ENCODE measurements at regions of chr1 and their contacts with region 1.

Region 1: GRCh38 chr1:156383023-156383422 is 14.0 kb downstream of the RHBG start:
- DNase-seq: peak in 5 of 6 donors; percentile 41 to 76 (median 60)
- ATAC-seq: peak; percentile 85 to 94 (median 92)
- H3K4me3 ChIP-seq: no peak overlapping the region
- H3K27ac ChIP-seq: no peak overlapping the region
- H3K4me1 ChIP-seq: no peaks in the 10 kb centered on the region
- H3K27me3 ChIP-seq: no peaks in the 10 kb centered on the region
- CTCF ChIP-seq: peak; percentile 59 to 78 (median 66)

Region 2: DNA sequence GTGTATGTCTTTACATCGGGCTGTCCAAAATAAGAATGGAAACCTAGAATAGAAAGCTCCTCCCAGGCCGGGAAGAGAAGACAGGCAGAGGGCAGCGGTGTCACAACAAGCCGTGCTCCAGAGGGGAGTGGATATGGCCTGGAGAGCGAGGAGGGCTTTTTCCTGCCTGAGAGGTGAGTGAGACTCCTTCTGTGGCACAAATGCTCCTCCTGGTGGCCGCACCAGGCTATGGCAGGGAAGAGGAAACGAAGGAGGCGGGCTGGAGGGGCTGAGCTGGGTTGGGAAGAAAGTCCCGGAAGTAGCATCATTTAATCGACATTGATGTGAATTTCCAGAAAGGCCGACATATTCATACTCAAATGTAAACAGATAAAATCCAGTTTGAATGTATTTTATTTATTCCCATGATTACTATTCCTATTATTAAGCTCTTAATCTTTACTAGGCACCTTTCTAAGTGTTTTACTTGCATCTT is 62.8 kb after region 1 on chr1:
- intact Hi-C with region 1: loop called (anchors 2 to 10 kb)
- DNase-seq: peak; percentile 73 to 92 (median 86)
- ATAC-seq: peak; percentile 94 to 100 (median 99)
- H3K4me3 ChIP-seq: no peak overlapping the region
- H3K27ac ChIP-seq: no peak overlapping the region
- H3K4me1 ChIP-seq: no peaks in the 10 kb centered on the region
- H3K27me3 ChIP-seq: peaks cover 0 to 22% (median 0%) of the 10 kb centered on the region in 4 donors
- CTCF ChIP-seq: peak; percentile 86 to 96 (median 91)

Region 3: GRCh38 chr1:156625436-156626078 is 242.5 kb after region 1 on chr1:
- intact Hi-C with region 1: loop called in 1 of 3 experiments (anchors 5 kb)
- DNase-seq: peak in 5 of 6 donors; percentile 21 to 88 (median 70)
- ATAC-seq: peak in 3 of 4 donors; percentile 73 to 78 (median 74)
- H3K4me3 ChIP-seq: peak overlapping the region in 1 of 4 donors; percentile 45
- H3K27ac ChIP-seq: no peak overlapping the region
- H3K4me1 ChIP-seq: peaks cover 4 to 14% (median 5%) of the 10 kb centered on the region in 3 donors
- H3K27me3 ChIP-seq: peaks cover 0 to 32% (median 6%) of the 10 kb centered on the region in 4 donors
- CTCF ChIP-seq: peak; percentile 50 to 75 (median 68)